Heart right ventricle (tissue), 16 donors: ENCODE measurements at regions of chr15 and their contacts with region 1.

Region 1: DNA sequence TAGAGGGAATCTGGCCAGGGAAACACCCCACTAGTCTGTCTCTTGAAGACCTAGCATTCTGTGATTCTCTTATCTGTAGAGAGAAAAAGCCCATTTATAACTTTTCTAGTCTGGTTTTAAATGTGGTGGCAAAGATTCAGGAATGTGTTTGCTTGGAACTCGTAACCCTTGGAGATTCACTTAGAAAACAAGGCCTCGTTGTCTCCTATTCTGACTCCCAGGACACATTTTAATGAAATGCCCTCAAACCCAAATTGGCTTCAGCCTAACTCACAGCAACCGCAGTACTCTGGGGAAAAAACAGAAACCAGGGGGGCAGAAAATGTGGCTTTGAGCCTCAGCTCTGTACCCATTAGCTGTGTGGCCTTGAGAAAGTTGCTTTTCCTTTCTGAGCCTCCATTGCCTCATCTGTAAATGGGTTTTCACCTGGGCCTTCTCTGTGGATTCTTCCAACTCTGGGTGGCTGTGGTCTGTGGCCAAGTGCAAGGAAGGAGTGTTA is 36.5 kb downstream of the RPLP1 start:
- DNase-seq: no peak
- ATAC-seq: peak in 5 of 8 donors; percentile 12 to 53 (median 28)
- H3K4me3 ChIP-seq: no peak overlapping the region
- H3K27ac ChIP-seq: peak overlapping the region in 2 of 10 donors; percentile 4 to 16
- H3K4me1 ChIP-seq: peaks cover 0 to 14% (median 0%) of the 10 kb centered on the region in 9 donors
- H3K27me3 ChIP-seq: no peaks in the 10 kb centered on the region
- CTCF ChIP-seq: no peak

Region 2: DNA sequence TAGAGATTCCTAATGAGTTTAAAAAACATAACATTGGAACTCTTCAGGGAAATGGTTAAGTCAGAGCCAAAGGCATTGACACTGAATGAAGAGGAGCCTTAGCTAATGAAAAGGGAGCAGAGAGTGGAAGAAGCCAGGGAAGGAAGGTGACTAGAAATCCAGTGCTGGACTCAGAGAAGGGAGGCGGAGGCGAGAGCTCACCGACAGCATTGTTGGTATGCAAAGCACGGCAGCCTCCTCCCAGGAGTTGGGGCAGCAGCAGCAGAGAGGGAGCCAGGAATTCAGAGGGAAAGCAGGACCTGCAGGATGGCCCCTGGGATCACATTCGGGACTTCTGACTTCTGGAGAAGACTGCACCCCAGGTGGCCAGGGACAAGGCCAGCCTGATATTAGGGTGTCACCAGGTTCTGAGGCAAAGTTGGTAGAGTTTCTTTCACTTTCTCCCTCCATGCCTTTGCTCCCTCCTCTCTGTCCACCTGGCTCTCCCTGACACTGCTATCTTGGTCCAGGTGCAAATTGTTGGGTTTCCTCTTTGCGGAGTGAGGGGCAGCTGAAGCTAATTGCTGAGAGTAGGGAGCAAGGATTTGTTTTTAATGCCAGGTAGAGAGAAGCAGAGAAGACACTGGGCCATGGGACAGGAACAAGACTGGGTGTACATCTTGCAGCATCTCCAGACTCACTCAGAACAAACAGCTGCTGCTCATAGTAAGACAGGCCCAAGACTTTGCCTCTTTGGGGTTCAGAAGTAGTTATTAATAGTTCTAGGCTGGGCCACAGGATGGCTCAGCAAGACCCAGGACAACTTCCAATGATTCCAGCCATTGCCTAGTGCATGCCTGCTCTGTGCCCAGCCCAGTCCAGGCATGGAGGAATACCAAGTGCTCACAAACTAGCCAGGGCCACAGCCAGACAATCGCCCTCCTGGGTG is 450.7 kb after region 1 on chr15:
- intact Hi-C with region 1: loop called in 1 of 10 experiments (anchors 10 kb)
- DNase-seq: no peak
- ATAC-seq: peak in 4 of 8 donors; percentile 37 to 61 (median 43)
- H3K4me3 ChIP-seq: no peak overlapping the region
- H3K27ac ChIP-seq: no peak overlapping the region
- H3K4me1 ChIP-seq: no peaks in the 10 kb centered on the region
- H3K27me3 ChIP-seq: peaks cover 0 to 5% (median 0%) of the 10 kb centered on the region in 7 donors
- CTCF ChIP-seq: no peak